WTC11 (cell line): ENCODE measurements at regions of chr2 and their contacts with region 1.

Region 1: DNA sequence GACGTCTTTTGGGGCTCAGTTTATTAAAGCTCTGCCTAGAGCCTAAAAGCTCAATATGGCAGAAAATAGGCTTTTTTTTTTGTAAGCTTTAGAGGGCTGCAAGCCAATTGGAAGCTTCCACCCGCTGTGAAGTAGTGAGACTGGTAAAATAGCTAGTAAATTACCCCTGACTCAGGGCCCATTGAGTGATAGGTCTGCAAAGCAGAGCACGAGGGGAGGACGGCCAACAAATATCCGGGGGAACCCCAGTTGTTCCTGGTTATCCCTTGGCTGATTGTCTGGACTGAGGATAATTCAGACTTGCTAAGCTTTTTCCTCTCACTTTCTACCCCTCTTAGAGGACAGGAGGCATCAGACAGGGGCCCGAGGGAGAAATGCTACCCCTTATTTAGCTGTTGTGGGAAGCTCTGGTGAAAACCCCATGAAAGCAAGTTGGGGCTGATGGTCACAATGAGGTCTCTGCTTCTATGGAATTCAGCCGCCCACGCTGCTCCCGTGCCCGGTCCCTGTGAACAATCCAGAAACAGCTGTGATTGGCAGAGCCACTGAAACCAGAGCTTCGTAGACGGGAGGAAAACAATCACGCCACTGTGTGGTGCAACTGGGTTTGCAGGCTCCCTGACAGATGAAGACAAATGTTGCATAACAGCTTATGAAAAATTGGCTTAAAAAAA is 141.9 kb upstream of the LGALSL start:
- DNase-seq: no peak
- ATAC-seq: peak; percentile 63
- H3K4me3 Mint-ChIP-seq: no peak overlapping the region
- H3K27ac Mint-ChIP-seq: no peak overlapping the region
- H3K4me1 Mint-ChIP-seq: peaks cover 31% of the 10 kb centered on the region
- H3K27me3 Mint-ChIP-seq: peaks cover 10% of the 10 kb centered on the region
- CTCF ChIP-seq: no peak

Region 2: DNA sequence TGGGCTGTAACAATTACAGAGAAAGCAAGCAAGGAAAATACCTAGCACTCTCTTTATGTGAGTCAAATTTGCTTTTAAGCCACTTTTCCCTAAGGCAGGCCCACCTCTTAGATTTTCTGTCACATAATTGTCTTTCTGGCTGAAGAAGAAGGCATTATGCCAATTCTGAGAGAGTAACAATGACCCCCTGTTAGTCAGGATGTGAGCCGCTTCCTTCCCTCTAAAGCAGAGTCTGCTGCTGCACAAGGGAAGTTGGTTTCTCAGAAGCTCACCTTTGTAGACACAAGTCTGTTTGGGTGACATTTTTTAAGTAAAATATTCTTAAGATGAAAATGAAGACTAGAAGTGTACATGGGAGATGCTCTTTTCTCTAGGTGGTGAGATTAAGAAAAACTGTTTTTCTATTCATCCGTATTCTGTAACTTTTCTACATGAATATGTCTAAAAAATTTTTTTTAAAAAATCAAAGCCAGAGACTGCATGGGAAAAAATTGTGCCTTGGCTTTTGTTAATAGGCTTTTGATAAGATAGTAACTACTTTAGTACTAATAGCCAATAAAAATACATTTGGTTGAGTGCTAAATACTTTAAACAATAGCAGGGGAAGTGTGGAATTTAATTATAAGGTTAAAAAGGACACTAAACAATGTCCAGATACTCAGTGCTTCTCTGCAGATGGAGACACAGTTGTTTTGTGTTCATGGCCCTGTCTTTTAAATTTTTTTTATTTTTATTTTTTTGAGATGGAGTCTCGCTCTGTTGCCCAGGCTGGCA is 259.4 kb before region 1 on chr2:
- CTCF ChIA-PET with region 1: interaction called, 15 read pairs
- POLR2A ChIA-PET with region 1: no interaction called
- DNase-seq: no peak
- ATAC-seq: no peak
- H3K4me3 Mint-ChIP-seq: no peak overlapping the region
- H3K27ac Mint-ChIP-seq: no peak overlapping the region
- H3K4me1 Mint-ChIP-seq: peaks cover 40% of the 10 kb centered on the region
- H3K27me3 Mint-ChIP-seq: no peaks in the 10 kb centered on the region
- CTCF ChIP-seq: no peak

Region 3: DNA sequence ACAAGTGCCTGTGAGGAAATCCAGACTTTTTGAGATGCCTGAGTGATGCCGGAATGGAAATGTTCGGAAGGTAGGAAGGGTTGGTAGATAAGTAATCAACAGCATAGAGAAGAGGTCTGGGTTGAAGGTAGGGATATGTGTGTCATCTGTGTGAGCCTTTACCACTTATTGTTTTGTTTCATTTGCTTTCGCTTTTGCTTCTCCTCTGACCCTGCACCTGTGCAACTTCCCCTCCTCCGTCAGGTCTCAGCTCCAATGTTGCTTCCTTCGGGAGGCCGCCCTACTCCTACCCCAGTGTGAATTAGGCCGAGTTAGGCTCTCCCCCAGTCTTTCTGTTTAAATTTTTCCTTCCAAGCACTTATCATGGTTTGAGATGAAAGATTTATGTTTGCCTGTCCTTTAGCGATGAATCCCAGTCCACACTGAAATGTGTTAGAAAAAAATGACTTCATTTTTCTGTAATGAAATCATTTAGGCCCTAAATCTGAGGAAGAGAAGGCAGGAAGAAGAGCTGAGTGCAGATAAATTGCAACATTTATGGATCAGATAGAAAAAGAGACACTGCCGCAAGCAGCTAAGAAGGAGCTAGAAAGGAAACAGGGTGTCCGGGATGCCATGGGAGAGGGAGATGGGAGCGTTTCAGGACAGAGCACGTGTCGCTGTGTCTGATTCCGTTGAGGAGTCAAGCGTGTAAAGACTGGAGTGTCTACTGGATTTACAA is 28.3 kb before region 1 on chr2:
- CTCF ChIA-PET with region 1: no interaction called
- POLR2A ChIA-PET with region 1: no interaction called
- DNase-seq: no peak
- ATAC-seq: no peak
- H3K4me3 Mint-ChIP-seq: no peak overlapping the region
- H3K27ac Mint-ChIP-seq: no peak overlapping the region
- H3K4me1 Mint-ChIP-seq: peaks cover 35% of the 10 kb centered on the region
- H3K27me3 Mint-ChIP-seq: 0 out of 2 replicates have a peak, but pooled peaks cover 3% of the 10 kb centered on the region
- CTCF ChIP-seq: no peak